Ovary (tissue), 10 donors: ENCODE measurements at regions of chr5 and their contacts with region 1.

Region 1: GRCh38 chr5:67731886-67732285 is 483.7 kb upstream of the PIK3R1 start:
- DNase-seq: no peak
- H3K4me3 ChIP-seq: no peak overlapping the region
- H3K27ac ChIP-seq: no peak overlapping the region
- H3K4me1 ChIP-seq: no peaks in the 10 kb centered on the region
- H3K27me3 ChIP-seq: no peaks in the 10 kb centered on the region
- CTCF ChIP-seq: no peak
- EP300 ChIP-seq: no peak
- POLR2A ChIP-seq: no peak

Region 2: DNA sequence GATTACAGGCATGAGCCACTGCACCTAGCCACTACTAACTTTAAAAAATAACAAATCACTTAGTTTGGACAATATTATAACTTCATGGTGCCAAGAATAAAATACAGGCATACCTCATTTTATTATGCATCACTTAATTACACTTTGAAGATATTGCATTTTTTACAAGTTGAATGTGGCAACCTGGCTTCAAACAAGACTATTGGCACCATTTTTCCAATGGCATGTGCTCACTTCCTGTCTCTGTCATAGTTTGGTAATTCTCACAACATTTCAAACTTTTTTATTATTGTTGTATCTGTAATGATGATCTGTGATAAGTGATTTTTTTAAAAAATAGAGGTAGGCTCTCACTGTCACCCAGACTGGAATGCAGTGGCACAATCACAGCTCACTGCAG is 1855.4 kb before region 1 on chr5:
- intact Hi-C with region 1: loop called in 1 of 4 experiments (anchors 5 kb)
- DNase-seq: no peak
- H3K4me3 ChIP-seq: no peak overlapping the region
- H3K27ac ChIP-seq: no peak overlapping the region
- H3K4me1 ChIP-seq: no peaks in the 10 kb centered on the region
- H3K27me3 ChIP-seq: no peaks in the 10 kb centered on the region
- CTCF ChIP-seq: no peak
- EP300 ChIP-seq: no peak
- POLR2A ChIP-seq: no peak

Region 3: DNA sequence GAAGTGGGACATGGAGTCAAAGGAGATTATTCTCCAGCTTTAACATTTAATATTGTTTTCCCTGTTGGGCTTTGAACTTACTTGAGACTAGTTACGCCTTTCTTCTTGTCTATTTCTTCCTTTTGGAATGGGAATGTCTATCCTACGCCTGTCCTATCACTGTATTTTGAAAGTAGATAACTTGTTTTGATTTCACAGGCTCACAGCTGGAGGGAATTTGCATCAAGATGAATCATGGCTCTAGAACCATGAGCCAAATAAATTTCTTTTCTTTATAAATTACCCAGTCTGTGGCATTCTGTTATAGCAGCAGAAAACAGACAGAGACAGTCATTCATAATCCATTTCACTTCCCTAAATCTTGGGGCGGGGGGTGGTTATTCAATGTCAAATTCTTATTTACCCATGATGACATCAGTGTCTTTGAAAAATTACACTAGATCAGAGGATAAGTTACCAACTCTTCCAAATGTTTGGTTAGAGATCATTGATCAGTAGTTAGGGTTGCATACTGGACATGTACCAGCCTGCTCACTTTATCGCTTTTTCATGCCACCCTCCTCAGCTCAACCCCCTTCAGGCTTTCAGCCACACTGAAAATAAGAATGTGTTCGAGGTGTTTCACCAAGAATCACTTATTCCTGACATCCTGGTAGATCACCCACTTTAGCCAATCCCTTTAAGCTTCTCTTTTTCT is 64.0 kb after region 1 on chr5:
- intact Hi-C with region 1: no loop called
- DNase-seq: no peak
- H3K4me3 ChIP-seq: no peak overlapping the region
- H3K27ac ChIP-seq: no peak overlapping the region
- H3K4me1 ChIP-seq: peaks cover 1% of the 10 kb centered on the region
- H3K27me3 ChIP-seq: no peaks in the 10 kb centered on the region
- CTCF ChIP-seq: no peak
- EP300 ChIP-seq: no peak
- POLR2A ChIP-seq: no peak